ENCODE measurements at regions of chr1 and their contacts with region 1.

Region 1: GRCh38 chr1:158124999-158125398 is 55.7 kb upstream of the CD1D start:
- DNase-seq: peak; percentile 98
- H3K4me3 Mint-ChIP-seq: no peak overlapping the region
- H3K27ac Mint-ChIP-seq: no peak overlapping the region
- H3K4me1 Mint-ChIP-seq: peaks cover 14% of the 10 kb centered on the region
- H3K27me3 Mint-ChIP-seq: no peaks in the 10 kb centered on the region
- CTCF ChIP-seq: peak; percentile 98

Region 2: GRCh38 chr1:157691285-157691920 is 433.6 kb before region 1 on chr1:
- CTCF ChIA-PET with region 1: interaction called, 15 read pairs
- POLR2A ChIA-PET with region 1: no interaction called
- intact Hi-C with region 1: loop called (anchors 5 kb)
- DNase-seq: peak; percentile 58
- H3K4me3 Mint-ChIP-seq: no peak overlapping the region
- H3K27ac Mint-ChIP-seq: no peak overlapping the region
- H3K4me1 Mint-ChIP-seq: no peaks in the 10 kb centered on the region
- H3K27me3 Mint-ChIP-seq: peaks cover 48% of the 10 kb centered on the region
- CTCF ChIP-seq: peak; percentile 62

Region 3: GRCh38 chr1:157963713-157964112 is 161.3 kb before region 1 on chr1:
- CTCF ChIA-PET with region 1: interaction called, 2,587 read pairs
- POLR2A ChIA-PET with region 1: interaction called, 23 read pairs
- intact Hi-C with region 1: loop called (anchors 1 kb)
- DNase-seq: peak; percentile 91
- H3K4me3 Mint-ChIP-seq: no peak overlapping the region
- H3K27ac Mint-ChIP-seq: no peak overlapping the region
- H3K4me1 Mint-ChIP-seq: peaks cover 25% of the 10 kb centered on the region
- H3K27me3 Mint-ChIP-seq: peaks cover 18% of the 10 kb centered on the region
- CTCF ChIP-seq: peak; percentile 99

Region 4: DNA sequence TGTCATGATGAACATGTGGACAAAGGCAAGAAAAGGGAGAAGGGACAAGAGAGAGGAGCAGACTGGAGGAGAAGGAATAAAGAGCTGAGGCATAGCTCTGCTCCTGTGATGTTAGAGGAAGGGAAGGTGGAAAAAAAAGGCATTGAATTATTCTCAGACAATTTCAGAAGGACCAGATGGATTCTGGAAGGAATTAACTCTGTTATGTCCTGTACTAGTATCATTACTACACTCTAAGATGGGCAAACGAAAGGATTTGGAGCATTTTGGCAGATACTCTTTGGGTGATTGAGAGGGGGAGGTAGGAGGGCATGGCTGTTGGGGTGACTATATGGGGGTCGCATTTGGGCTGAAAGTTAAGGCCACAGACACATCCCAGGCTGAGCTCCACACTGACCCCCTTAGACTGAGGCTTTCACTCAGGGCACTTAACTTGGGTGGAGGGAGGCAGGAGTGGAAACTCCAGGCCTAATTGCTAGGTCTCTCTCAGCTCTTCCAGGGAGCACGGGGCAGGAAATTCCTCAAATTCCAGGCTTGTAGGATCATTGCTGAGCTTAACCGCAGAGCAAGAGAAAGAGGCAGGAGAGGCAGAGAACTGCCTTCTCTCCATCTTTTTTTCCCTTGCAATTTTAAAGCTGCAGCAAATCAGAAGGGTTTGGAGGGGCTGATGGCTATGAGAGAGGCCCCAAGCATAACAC is 105.7 kb before region 1 on chr1:
- CTCF ChIA-PET with region 1: interaction called, 13 read pairs
- POLR2A ChIA-PET with region 1: no interaction called
- intact Hi-C with region 1: no loop called
- DNase-seq: peak; percentile 92
- H3K4me3 Mint-ChIP-seq: peak overlapping the region; percentile 20
- H3K27ac Mint-ChIP-seq: peak overlapping the region; percentile 86
- H3K4me1 Mint-ChIP-seq: peaks cover 74% of the 10 kb centered on the region
- H3K27me3 Mint-ChIP-seq: no peaks in the 10 kb centered on the region
- CTCF ChIP-seq: no peak

Region 5: GRCh38 chr1:158145173-158145719 is 20.2 kb after region 1 on chr1:
- CTCF ChIA-PET with region 1: interaction called, 23 read pairs
- POLR2A ChIA-PET with region 1: interaction called, 4 read pairs
- intact Hi-C with region 1: no loop called
- DNase-seq: peak; percentile 98
- H3K4me3 Mint-ChIP-seq: no peak overlapping the region
- H3K27ac Mint-ChIP-seq: peak overlapping the region; percentile 21
- H3K4me1 Mint-ChIP-seq: peaks cover 44% of the 10 kb centered on the region
- H3K27me3 Mint-ChIP-seq: no peaks in the 10 kb centered on the region
- CTCF ChIP-seq: no peak

Region 6: DNA sequence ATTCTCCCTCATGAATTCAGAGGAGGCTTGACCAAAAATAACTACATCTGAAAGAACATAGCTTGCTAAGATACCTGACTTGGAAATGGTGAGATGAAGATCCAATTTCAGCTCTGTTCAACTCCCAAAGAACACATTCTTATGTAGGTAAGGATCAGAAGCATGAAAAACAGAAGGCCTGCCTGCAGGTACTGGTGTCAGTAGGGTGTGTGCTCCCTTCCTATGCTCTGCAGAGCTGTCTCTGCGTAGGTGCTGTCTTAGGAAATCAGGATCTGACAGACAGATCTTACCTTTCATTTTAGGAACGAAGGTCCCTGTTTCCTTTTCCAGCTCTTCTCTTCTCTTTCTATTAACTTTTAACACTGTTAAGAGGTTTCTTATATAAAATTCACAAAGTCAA is 581.1 kb after region 1 on chr1:
- CTCF ChIA-PET with region 1: no interaction called
- POLR2A ChIA-PET with region 1: no interaction called
- intact Hi-C with region 1: no loop called
- DNase-seq: no peak
- H3K4me3 Mint-ChIP-seq: no peak overlapping the region
- H3K27ac Mint-ChIP-seq: no peak overlapping the region
- H3K4me1 Mint-ChIP-seq: no peaks in the 10 kb centered on the region
- H3K27me3 Mint-ChIP-seq: peaks cover 28% of the 10 kb centered on the region
- CTCF ChIP-seq: no peak

Region 7: GRCh38 chr1:159071970-159072582 is 947.1 kb after region 1 on chr1:
- CTCF ChIA-PET with region 1: interaction called, 38 read pairs
- POLR2A ChIA-PET with region 1: no interaction called
- intact Hi-C with region 1: loop called (anchors 1 kb)
- DNase-seq: peak; percentile 78
- H3K4me3 Mint-ChIP-seq: no peak overlapping the region
- H3K27ac Mint-ChIP-seq: no peak overlapping the region
- H3K4me1 Mint-ChIP-seq: no peaks in the 10 kb centered on the region
- H3K27me3 Mint-ChIP-seq: no peaks in the 10 kb centered on the region
- CTCF ChIP-seq: peak; percentile 91

Measured in MCF 10A (cell line).